GM12878 (cell line): ENCODE measurements at regions of chrX and their contacts with region 1.

Region 1: DNA sequence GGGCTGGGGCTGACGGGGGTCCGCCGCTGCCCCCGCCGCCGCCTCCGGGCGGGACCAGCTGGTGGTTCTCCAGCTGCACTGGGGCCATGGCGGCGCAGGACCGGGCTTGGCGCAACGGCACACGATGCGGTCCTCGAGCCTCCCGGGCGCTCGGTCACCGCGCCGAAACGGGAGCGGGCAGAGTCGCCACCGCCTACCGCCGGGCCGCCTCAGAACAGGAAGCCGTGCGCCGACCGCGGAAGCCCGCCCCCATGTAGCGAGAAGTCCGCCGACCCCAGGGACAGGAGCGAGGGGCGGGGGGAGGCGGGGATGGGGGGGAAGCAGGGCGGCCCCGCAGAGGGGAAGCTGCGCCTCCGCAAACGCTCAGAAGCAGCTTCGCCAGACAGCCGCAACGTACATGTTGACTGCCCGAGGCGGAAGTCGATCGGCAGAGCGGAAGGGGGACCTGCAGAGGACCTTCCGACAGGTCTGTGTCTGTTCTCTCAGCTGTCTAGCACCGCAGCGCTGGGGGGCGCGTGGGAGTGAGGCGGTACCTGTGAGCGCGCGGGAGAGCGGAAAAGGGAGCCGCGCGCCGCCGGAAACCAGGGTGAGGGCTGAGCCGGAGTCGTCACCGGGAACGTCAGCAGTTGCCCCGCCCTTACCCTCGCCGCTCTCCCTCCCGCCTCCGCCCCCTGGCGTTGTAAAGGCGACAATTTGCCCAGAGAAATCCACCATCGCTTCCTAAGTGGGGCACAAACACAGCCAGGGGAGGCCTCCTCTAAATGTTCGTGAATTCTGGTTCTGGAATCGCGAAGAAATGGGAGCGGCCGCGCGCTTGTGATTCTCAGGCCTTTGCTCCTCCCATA is at the start of gene MED14:
- DNase-seq: peak; percentile 73
- ATAC-seq: peak; percentile 92
- H3K4me3 ChIP-seq: peak within 1 kb of the TSS; percentile 86
- H3K27ac ChIP-seq: peak within 1 kb of the TSS; percentile 92
- H3K4me1 ChIP-seq: no peaks in the 10 kb centered on the region; the same call in 1 of the 2 replicates
- H3K27me3 ChIP-seq: no peaks in the 10 kb centered on the region
- CTCF ChIP-seq: peak; percentile 62 to 64 (median 62)
- EP300 ChIP-seq: 0 out of 4 replicates have a peak, but pooled peaks of 1 of the 2 experiments have one; percentile 5
- POLR2A ChIP-seq: peak; percentile 93
- RAD21 ChIP-seq: no peak
- polyA plus RNA-seq, gene MED14: 8.8 to 17.0 TPM

Region 2: DNA sequence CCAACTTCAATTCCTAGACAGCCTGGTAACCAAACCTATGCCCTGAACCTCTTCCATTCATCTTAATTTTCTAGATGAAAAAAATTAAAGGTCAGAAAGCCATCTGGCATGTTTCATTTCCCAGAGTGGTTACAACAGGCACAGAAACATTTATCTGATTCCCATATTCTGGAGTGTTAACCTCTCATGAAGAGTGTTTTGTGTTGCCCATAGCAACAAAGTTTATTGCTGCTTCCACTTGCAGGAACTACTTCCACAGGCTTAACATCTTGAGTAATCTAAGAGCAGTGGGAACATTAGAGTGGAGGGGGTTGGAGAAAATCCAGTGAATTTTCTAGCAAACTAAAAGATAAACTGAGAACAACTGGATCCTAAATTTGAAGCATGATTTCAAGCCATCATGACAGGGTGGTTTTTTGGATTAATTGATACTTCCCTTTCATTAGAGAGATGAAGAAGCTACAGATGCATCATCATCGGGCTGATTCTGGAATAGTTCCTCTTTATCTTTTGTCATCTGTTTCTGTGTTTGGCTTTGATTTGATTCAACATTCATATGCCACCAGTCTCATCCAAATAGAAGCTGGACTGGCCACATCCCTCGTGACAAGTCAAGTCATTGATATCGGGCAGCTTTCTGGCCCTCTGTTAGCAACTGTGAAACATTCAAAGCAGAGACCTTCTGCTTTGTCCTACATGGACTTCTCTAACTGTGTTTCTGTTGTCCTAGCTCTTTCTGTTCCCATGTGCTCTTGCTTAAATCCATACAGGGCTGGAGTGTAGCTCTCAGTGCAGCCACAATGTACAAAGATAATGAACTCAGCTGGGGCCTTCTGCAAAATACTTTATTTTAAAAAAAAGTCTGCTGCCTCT is 1767.0 kb before region 1 on chrX:
- CTCF ChIA-PET with region 1: no interaction called
- POLR2A ChIA-PET with region 1: no interaction called
- RAD21 ChIA-PET with region 1: no interaction called
- SMC1A ChIA-PET with region 1: no interaction called
- in situ Hi-C with region 1: no loop called
- intact Hi-C with region 1: no loop called
- DNase-seq: no peak
- ATAC-seq: no peak
- H3K4me3 ChIP-seq: no peak overlapping the region
- H3K27ac ChIP-seq: no peak overlapping the region
- H3K4me1 ChIP-seq: no peaks in the 10 kb centered on the region
- H3K27me3 ChIP-seq: no peaks in the 10 kb centered on the region
- CTCF ChIP-seq: no peak
- EP300 ChIP-seq: no peak
- POLR2A ChIP-seq: no peak
- RAD21 ChIP-seq: no peak

Region 3: DNA sequence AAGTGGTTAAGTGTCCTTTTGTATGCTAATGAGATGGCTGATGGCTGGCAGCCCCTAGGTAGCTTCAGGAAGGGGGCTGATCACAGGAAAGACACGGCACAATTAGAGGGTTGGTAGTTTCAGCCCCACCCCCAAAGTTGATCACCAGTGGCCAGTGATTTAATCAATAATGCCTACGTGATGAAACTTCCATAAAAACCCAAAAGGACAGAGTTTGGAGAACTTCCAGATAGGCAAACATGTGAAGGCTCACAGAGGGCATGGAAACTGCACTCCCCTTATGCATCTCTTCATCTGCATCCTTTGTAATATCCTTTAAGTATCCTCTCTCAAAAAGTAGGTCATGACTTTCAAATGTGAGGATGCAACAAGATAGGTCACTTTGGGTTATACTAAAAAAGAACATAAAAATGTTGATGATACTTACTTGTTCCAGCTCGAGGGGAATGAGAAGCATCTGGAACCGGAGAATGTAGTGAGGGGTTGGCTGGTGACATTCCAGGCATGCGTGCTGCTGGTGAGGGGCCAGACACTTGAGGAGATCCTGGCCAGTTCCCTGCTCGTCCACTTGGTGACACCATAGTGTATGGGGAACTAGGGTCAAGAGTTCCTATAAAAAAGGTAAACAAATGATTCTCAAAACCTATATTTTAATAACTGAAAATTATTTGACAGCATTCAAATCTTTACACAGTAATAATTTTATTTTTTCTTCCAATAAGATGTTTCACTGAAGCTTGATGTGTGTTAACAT is 71.5 kb before region 1 on chrX:
- CTCF ChIA-PET with region 1: no interaction called
- POLR2A ChIA-PET with region 1: no interaction called
- RAD21 ChIA-PET with region 1: no interaction called
- SMC1A ChIA-PET with region 1: no interaction called
- in situ Hi-C with region 1: no loop called
- intact Hi-C with region 1: loop called (anchors 5 kb)
- DNase-seq: no peak
- ATAC-seq: no peak
- H3K4me3 ChIP-seq: no peak overlapping the region
- H3K27ac ChIP-seq: no peak overlapping the region
- H3K4me1 ChIP-seq: no peaks in the 10 kb centered on the region; the same call in 1 of the 2 replicates
- H3K27me3 ChIP-seq: no peaks in the 10 kb centered on the region
- CTCF ChIP-seq: peak; percentile 14 to 26 (median 24); a peak in 2 of 6 replicates
- EP300 ChIP-seq: no peak
- POLR2A ChIP-seq: no peak
- RAD21 ChIP-seq: 0 out of 2 replicates have a peak, but pooled peaks have one; percentile 20

Region 4: GRCh38 chrX:40749681-40750494 is 14.3 kb after region 1 on chrX:
- CTCF ChIA-PET with region 1: interaction called, 11 read pairs
- POLR2A ChIA-PET with region 1: interaction called, 8 read pairs
- RAD21 ChIA-PET with region 1: interaction called, 6 read pairs
- SMC1A ChIA-PET with region 1: interaction called, 8 read pairs
- in situ Hi-C with region 1: no loop called
- intact Hi-C with region 1: no loop called
- DNase-seq: peak; percentile 65
- ATAC-seq: peak; percentile 98
- H3K4me3 ChIP-seq: peak overlapping the region; percentile 17; the same call in 1 of the 2 replicates
- H3K27ac ChIP-seq: peak overlapping the region; percentile 70
- H3K4me1 ChIP-seq: peaks cover 11% of the 10 kb centered on the region
- H3K27me3 ChIP-seq: no peaks in the 10 kb centered on the region
- CTCF ChIP-seq: no peak
- EP300 ChIP-seq: peak; percentile 51 to 69; a peak in 3 of 4 replicates
- POLR2A ChIP-seq: no peak
- RAD21 ChIP-seq: no peak

Region 5: GRCh38 chrX:40844471-40844870 is 108.9 kb after region 1 on chrX:
- CTCF ChIA-PET with region 1: no interaction called
- POLR2A ChIA-PET with region 1: no interaction called
- RAD21 ChIA-PET with region 1: no interaction called
- SMC1A ChIA-PET with region 1: no interaction called
- in situ Hi-C with region 1: no loop called
- intact Hi-C with region 1: no loop called
- DNase-seq: no peak
- ATAC-seq: no peak
- H3K4me3 ChIP-seq: no peak overlapping the region
- H3K27ac ChIP-seq: no peak overlapping the region
- H3K4me1 ChIP-seq: no peaks in the 10 kb centered on the region
- H3K27me3 ChIP-seq: no peaks in the 10 kb centered on the region
- CTCF ChIP-seq: no peak
- EP300 ChIP-seq: no peak
- POLR2A ChIP-seq: no peak
- RAD21 ChIP-seq: no peak

Region 6: DNA sequence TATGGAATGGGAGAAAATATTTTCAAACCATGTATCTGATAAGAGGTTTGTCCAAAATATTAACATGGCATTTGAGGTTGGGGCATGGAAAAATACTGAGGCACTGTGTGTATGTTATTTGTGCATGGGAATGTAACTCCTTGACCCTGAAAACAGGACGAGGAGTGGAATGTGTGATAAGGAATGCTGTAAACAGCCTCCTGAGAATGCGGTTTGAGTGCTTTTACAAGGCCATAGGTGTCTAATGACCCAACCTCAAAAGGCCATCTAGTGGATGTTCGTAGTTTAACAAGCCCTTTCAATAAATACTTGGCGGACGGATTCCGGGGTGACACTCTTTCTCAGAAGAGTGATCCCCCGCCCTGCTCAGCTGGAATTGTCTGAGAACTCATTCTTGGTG is 186.8 kb after region 1 on chrX:
- CTCF ChIA-PET with region 1: no interaction called
- POLR2A ChIA-PET with region 1: no interaction called
- RAD21 ChIA-PET with region 1: no interaction called
- SMC1A ChIA-PET with region 1: no interaction called
- in situ Hi-C with region 1: no loop called
- intact Hi-C with region 1: no loop called
- DNase-seq: no peak
- ATAC-seq: no peak
- H3K4me3 ChIP-seq: no peak overlapping the region
- H3K27ac ChIP-seq: no peak overlapping the region
- H3K4me1 ChIP-seq: no peaks in the 10 kb centered on the region
- H3K27me3 ChIP-seq: no peaks in the 10 kb centered on the region
- CTCF ChIP-seq: peak; percentile 21 to 40 (median 32); a peak in 4 of 6 replicates
- EP300 ChIP-seq: no peak
- POLR2A ChIP-seq: no peak
- RAD21 ChIP-seq: peak; percentile 40; the same call in 1 of the 2 replicates